ENCODE measurements at regions of chr2 and their contacts with region 1.

Region 1: DNA sequence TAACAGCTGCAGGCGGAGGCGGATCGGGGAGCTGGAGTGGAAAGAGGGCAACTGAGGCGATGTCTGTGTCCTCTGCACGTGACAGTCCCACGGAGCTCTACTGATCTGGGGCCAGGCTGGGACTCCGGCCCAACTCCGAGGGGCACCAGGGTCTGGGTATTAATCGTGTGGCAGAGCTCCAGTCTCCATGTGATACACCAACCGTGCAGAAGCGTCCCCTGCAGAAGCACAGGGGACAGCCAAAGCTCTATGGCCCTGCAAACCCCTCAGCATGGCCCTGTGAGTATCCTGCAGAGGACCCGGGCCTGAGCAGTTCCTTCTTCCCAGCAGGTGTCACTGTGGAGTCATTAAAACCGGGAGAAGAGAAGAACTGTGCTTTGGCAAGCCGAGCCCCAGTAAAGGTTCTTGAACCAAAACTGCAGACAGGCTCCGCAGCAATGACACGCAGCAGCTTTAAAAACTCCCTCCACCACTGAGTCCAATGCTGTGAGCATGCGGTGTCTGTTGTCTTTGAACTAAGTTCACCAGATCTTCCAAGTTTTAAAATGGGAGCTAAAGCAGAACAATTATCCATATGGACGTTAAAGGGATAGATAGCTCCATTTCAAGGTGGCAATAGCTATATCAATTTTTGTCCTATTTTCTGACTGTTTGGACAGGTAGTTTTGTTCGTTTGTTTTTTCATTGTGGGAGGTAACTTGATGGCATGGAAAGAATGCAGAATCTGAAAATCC is 79.4 kb downstream of the TMEM182 start:
- DNase-seq: peak; percentile 43
- CTCF ChIP-seq: peak; percentile 70

Region 2: DNA sequence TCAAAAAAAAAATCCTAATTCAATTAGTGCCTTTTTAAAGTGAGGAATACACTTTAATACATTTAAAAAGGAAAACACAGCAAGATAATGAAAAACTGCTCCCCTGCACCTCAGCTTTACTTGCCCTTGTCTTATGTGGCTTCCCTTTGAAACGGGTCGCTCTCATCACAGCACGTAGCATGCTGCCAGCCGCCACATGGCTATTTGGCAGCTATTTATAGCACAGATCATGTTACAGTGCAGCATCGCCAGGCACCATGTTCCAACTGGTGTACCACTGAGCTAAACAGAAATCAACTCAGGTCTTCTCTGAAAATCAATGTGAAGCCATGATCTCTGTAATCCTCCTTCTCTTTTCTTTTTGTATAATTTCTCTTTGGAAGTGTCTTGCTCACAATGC is 14.4 kb before region 1 on chr2:
- CTCF ChIA-PET with region 1: interaction called, 42 read pairs
- POLR2A ChIA-PET with region 1: no interaction called
- DNase-seq: no peak
- CTCF ChIP-seq: no peak

Region 3: GRCh38 chr2:102872388-102872787 is 31.1 kb after region 1 on chr2:
- CTCF ChIA-PET with region 1: interaction called, 13 read pairs
- POLR2A ChIA-PET with region 1: no interaction called
- DNase-seq: no peak
- CTCF ChIP-seq: no peak

Region 4: DNA sequence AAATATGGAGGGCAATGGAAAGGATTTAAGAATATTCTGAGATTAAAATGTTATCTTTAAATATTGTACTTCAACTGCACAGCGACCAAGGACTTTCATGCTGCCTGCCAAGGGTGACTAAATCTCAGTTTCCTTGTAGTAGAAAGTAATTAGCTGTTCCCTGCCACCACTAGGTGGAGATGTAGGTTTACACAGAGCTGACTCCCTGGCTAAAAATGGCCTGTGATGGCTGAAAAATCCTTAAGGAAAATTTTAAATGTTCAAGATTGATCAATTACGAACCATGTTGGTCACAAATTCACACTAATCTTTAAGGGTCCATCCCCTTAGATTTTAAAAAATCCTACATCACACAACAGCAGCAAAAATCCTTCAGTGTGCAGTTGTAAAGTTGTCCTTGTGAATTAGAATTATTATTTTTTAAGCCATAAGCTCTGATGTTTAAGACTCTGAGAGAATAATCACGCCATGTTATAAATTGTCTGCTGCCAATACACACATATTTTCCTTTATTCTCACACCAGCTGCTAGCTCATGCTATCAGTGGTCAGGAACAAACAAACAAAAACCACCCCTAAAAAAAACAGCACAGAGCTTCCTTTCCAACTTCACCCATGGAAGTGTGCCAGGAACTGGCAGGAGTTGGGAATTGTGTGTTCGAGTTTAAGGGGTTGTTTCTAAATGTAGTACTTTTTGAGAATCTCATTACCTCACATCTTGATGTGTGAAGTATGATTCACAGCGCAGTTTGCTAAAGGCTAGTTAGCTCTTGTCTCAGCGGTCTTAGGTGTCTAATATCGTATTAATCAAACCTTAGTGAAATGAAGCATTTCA is 320.4 kb after region 1 on chr2:
- CTCF ChIA-PET with region 1: interaction called, 10 read pairs
- POLR2A ChIA-PET with region 1: no interaction called
- DNase-seq: peak; percentile 40
- CTCF ChIP-seq: peak; percentile 76